HAP-1 (cell line): ENCODE measurements at regions of chr9 and their contacts with region 1.

Region 1: GRCh38 chr9:114282926-114283325 is 40.0 kb upstream of the ORM1 start:
- DNase-seq: no peak
- H3K4me3 ChIP-seq: no peak overlapping the region
- H3K4me1 ChIP-seq: no peaks in the 10 kb centered on the region
- H3K27me3 ChIP-seq: no peaks in the 10 kb centered on the region

Region 2: DNA sequence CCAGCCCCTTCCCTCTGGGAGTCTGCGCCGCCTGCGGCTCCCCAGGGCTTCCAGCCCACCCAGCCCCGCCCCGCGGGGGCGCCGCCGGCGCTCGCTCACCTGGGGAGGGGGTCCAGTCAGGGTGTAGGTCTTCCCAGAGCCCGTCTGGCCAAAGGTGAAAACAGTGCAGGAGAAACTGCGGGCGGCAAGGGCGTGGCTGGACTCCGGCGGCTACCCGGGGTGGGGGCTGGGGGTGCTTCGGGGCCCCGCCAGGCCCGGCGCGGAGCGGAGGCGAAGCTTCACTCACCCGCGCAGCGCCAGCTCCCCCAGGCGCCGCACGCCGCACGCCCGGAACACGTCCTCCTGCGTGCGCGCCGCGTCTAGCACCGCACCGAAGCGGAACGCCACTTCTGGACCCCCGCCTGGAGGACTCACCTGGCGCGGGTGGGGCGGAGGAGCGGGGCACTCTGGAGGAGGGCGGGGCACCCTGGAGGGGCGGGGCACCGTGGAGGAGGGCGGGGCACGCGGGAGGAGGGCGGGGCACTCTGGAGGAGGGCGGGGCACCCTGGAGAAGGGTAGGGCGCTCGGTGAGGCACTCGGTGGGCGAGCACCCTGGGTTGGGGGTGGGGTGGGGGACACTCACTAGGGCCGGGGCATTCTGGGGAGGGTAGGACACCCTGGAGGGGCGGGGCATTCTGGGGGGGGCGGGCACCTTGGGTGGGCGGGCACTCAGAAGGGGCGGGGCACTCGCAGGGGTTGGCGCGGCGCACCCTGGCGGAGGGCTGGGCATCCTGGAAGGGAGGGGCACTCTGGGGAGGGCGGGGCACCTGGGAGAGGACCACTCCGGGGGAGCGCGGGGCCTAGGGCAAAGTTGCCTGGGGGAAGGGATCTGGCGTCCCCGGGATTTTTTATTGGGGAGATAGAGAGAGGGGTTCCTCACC is 184.7 kb before region 1 on chr9:
- in situ Hi-C with region 1: loop called (anchors 10 kb)
- DNase-seq: peak; percentile 48 to 90
- H3K4me3 ChIP-seq: peak overlapping the region; percentile 36
- H3K4me1 ChIP-seq: peaks cover 3% of the 10 kb centered on the region; the same call in 1 of the 2 replicates
- H3K27me3 ChIP-seq: 0 out of 2 replicates have a peak, but pooled peaks cover 2% of the 10 kb centered on the region

Region 3: DNA sequence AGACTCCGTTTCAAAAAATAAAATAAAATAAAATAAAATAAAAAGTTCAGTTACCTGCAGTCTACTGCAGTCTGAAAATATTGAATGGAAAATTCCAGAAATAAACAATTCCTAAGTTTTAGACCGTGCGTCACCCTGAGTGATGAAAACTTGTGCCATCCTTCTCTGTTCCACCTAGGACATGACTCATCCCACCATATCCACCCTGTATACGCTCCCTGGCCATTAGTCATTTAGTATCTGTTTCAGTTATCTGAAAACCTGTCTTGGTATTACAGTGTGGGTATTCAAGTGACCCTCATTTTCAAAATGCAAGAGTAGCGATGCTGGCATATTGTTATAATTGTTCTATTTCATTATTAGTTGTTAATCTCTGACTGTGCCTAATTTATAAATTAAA is 450.9 kb after region 1 on chr9:
- in situ Hi-C with region 1: no loop called
- DNase-seq: no peak
- H3K4me3 ChIP-seq: no peak overlapping the region
- H3K4me1 ChIP-seq: no peaks in the 10 kb centered on the region
- H3K27me3 ChIP-seq: peaks cover 14% of the 10 kb centered on the region; the same call in 1 of the 2 replicates